ENCODE measurements at regions of chr12 and their contacts with region 1.

Region 1: GRCh38 chr12:82326905-82327503 is 31.2 kb downstream of the CCDC59 start:
- DNase-seq: no peak
- ATAC-seq: peak in 2 of 4 donors; percentile 52 to 56
- H3K4me3 ChIP-seq: no peak overlapping the region
- H3K27ac ChIP-seq: no peak overlapping the region
- H3K4me1 ChIP-seq: no peaks in the 10 kb centered on the region
- H3K27me3 ChIP-seq: no peaks in the 10 kb centered on the region
- CTCF ChIP-seq: peak in 2 of 4 donors; percentile 30 to 43

Region 2: DNA sequence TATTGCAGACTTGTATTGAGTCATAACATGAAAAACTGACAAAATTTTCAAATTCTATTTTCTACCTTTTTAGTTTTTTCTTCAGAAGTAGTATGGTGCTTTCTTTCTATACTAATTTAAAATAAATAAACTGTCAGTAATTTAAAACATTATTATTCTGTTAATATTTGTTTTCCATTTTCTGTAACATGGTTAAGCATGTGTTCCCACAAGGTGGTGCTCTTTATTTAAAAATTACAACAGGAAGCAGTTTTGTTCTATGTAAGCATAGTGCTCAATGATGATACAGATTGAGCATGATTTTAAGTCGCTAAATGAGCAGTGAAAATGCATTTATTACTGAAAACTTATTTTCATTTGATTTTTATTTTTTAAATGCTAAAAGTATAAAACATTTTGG is 682.5 kb before region 1 on chr12:
- intact Hi-C with region 1: loop called in 2 of 3 experiments (anchors 5 to 10 kb)
- DNase-seq: no peak
- ATAC-seq: peak; percentile 53 to 84 (median 82)
- H3K4me3 ChIP-seq: no peak overlapping the region
- H3K27ac ChIP-seq: no peak overlapping the region
- H3K4me1 ChIP-seq: no peaks in the 10 kb centered on the region
- H3K27me3 ChIP-seq: peaks cover 0 to 10% (median 0%) of the 10 kb centered on the region in 4 donors
- CTCF ChIP-seq: peak in 3 of 4 donors; percentile 36 to 41 (median 39)